Mammary epithelial cell (primary cell): ENCODE measurements at regions of chr1 and their contacts with region 1.

Region 1: GRCh38 chr1:41038105-41038504 is 16.6 kb upstream of the SLFNL1 start:
- DNase-seq: no peak
- H3K4me3 ChIP-seq: no peak overlapping the region
- H3K27ac ChIP-seq: no peak overlapping the region
- H3K4me1 ChIP-seq: no peaks in the 10 kb centered on the region
- H3K27me3 ChIP-seq: no peaks in the 10 kb centered on the region
- CTCF ChIP-seq: peak; percentile 8 to 33

Region 2: DNA sequence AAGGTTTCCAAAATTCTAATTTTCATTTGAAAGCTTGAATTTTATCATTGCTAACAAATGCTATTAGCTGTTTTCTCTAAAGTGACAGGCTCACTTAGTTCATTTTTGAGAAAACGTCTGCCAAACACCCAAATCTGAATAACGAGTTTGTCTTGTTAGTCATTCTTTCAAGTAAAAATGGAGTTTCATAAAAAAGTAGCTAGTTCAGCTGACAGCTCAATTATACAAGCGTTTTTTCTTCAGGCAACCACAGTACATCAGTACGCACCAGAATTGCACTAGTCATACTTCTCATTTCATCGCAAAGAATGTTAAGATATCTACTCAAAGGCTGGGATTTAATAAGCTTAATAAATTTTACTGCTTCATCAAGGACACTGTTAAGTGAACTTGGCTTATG is 55.7 kb after region 1 on chr1:
- CTCF ChIA-PET with region 1: no interaction called
- dilution Hi-C with region 1: loop called (anchors 5 kb)
- in situ Hi-C with region 1: no loop called
- intact Hi-C with region 1: no loop called
- DNase-seq: no peak
- H3K4me3 ChIP-seq: no peak overlapping the region
- H3K27ac ChIP-seq: no peak overlapping the region
- H3K4me1 ChIP-seq: no peaks in the 10 kb centered on the region
- H3K27me3 ChIP-seq: no peaks in the 10 kb centered on the region
- CTCF ChIP-seq: no peak